Heart left ventricle (tissue), 16 donors: ENCODE measurements at regions of chr6 and their contacts with region 1.

Region 1: DNA sequence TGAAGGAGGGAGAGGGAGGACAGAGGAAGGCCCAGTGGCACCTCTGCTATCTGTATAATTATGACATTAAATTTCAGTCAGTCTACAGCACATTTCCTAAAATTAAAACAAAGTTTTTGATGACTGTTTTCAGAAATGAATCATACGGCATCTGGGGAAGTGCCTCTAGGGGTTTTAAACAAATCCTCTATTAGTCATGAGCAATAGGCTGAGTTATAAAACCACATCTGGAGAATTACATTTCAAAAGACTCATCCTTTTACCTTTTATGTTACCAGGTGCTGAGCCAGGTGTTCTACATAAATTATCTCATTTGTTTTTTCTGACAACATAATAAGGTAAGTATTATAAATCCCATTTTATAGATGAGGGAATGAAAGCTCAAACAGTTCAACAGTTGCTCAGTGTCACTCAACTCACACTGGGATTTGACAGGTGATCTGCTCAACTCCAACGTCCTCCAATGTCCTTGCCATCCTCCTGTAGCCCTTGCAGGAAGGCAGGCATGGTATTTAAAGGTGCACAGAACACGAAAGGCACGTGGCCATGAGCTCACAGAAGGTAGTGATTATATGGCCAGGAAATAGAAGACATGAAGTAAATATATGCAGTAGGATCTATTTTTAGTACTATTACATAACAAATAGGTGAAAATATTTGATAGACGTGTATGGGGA is 184.2 kb upstream of the MAN1A1 start:
- DNase-seq: no peak
- ATAC-seq: peak in 1 of 4 donors; percentile 50
- H3K4me3 ChIP-seq: no peak overlapping the region
- H3K27ac ChIP-seq: no peak overlapping the region
- H3K4me1 ChIP-seq: peaks cover 0 to 11% (median 0%) of the 10 kb centered on the region in 12 donors
- H3K27me3 ChIP-seq: no peaks in the 10 kb centered on the region
- CTCF ChIP-seq: no peak
- POLR2A ChIP-seq: no peak

Region 2: GRCh38 chr6:119566546-119567260 is 33.0 kb after region 1 on chr6:
- intact Hi-C with region 1: no loop called
- DNase-seq: no peak
- ATAC-seq: no peak
- H3K4me3 ChIP-seq: no peak overlapping the region
- H3K27ac ChIP-seq: no peak overlapping the region
- H3K4me1 ChIP-seq: no peaks in the 10 kb centered on the region
- H3K27me3 ChIP-seq: no peaks in the 10 kb centered on the region
- CTCF ChIP-seq: no peak
- POLR2A ChIP-seq: no peak

Region 3: DNA sequence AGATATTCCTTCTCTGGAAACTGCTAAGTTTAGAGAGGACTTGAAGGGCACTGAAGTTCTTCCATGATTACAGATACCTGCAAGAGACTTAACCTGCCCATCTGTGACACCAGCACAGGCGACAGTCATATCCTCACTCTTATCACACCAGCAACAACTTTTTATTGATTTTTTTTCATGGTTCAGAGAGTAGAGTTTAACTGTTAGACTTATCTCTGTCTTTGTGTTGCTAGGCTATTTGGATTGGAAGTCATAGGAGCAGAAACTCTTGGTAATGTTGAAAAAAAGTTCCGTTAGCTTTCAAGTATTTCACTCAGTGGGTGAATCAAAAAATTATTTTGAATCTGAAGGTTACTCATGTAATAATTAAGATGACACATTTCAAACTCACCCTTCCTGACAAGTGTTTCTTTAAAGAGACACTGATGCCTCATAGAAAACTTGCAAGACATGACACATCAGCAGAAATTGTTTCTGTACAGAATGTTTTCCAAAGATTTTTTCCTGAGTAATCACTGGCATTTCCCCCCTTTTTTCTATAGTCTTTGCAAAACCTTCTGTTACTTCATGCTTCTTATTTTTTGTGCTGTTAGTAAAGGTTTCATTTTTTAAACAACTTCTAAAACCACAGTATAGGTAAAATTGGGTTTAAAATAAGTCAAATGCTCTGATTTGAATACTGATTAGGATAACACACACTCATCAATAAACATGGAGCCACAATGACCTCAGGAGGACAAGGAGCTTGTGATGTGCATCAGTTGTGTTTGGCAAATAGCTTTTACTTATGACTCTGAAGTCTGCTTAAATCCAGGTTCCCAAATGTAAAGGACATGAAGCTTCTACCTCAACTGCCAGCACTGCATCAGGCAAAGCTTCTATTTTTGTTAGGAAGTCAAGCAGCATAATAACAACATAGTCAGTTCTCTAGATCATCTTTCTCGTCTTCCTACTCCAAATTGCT is 68.8 kb after region 1 on chr6:
- intact Hi-C with region 1: loop called in 1 of 10 experiments (anchors 2 kb)
- DNase-seq: no peak
- ATAC-seq: no peak
- H3K4me3 ChIP-seq: no peak overlapping the region
- H3K27ac ChIP-seq: no peak overlapping the region
- H3K4me1 ChIP-seq: no peaks in the 10 kb centered on the region
- H3K27me3 ChIP-seq: no peaks in the 10 kb centered on the region
- CTCF ChIP-seq: no peak
- POLR2A ChIP-seq: no peak